BJ (cell line): ENCODE measurements at regions of chr19 and their contacts with region 1.

Region 1: GRCh38 chr19:18007044-18007916 is 690 bp upstream of the ARRDC2 start:
- DNase-seq: no peak
- H3K4me3 ChIP-seq: peak overlapping the region; percentile 35
- H3K27me3 ChIP-seq: no peaks in the 10 kb centered on the region
- CTCF ChIP-seq: peak; percentile 97

Region 2: GRCh38 chr19:18023622-18024251 is 16.5 kb after region 1 on chr19:
- CTCF ChIA-PET with region 1: interaction called, 11 read pairs
- POLR2A ChIA-PET with region 1: no interaction called
- DNase-seq: no peak
- H3K4me3 ChIP-seq: no peak overlapping the region
- H3K27me3 ChIP-seq: no peaks in the 10 kb centered on the region
- CTCF ChIP-seq: no peak

Region 3: GRCh38 chr19:18044825-18045304 is 37.6 kb after region 1 on chr19:
- CTCF ChIA-PET with region 1: interaction called, 13 read pairs
- POLR2A ChIA-PET with region 1: no interaction called
- DNase-seq: no peak
- H3K4me3 ChIP-seq: no peak overlapping the region
- H3K27me3 ChIP-seq: peaks cover 3% of the 10 kb centered on the region
- CTCF ChIP-seq: peak; percentile 5; the same call in 1 of the 2 replicates

Region 4: DNA sequence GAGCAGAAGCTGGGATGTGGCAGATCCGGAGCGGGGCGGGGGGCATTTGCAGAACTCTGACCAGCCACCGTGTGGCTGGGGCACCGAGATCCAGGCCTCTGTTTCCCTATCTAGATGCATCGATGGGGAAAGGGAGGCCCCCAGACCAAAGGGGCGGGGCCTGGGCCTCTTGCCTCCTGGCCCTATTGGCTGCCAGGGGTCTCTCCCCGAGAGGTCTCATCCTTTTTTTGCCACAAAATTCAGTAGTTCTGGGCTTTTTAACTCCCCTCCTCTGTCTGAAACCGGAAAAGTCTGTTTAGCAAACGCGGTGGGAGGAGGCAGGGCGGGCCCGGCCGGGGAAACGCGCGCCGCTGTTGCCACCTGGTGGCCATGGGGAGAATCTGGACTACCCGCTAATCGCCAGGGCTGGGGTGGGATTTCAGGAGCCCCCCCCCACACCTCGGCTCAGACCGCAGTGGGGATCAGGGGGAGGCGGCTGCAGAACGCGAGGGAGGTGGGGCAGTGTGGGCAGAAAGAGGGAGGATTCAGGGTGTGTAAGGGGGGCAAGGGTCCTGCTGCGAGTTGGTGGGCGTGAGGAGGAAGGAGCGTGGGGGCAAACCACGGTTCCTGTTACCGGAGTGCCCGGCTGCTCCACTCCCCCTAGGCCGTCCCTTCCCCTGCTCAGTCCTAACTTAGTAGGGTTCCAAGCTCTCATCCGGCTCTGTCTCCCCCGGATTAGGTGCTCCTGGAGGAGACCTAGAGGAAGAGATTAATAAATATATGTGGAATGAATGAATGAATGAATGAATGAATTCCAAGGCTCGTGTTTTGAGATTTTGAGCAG is 51.1 kb after region 1 on chr19:
- CTCF ChIA-PET with region 1: interaction called, 120 read pairs
- POLR2A ChIA-PET with region 1: no interaction called
- DNase-seq: no peak
- H3K4me3 ChIP-seq: no peak overlapping the region
- H3K27me3 ChIP-seq: no peaks in the 10 kb centered on the region; the same call in 1 of the 2 replicates
- CTCF ChIP-seq: peak; percentile 90